Head of caudate nucleus (tissue), 42 donors: ENCODE measurements at regions of chr19 and their contacts with region 1.

Region 1: GRCh38 chr19:2273356-2274184 is 8.4 kb downstream of the PEAK3 start:
- DNase-seq: peak in 36 of 42 donors; percentile 42 to 86 (median 72)

Region 2: GRCh38 chr19:2199215-2199614 is 74.4 kb before region 1 on chr19:
- intact Hi-C with region 1: no loop called
- DNase-seq: peak in 4 of 42 donors; percentile 23 to 61 (median 40)

Region 3: DNA sequence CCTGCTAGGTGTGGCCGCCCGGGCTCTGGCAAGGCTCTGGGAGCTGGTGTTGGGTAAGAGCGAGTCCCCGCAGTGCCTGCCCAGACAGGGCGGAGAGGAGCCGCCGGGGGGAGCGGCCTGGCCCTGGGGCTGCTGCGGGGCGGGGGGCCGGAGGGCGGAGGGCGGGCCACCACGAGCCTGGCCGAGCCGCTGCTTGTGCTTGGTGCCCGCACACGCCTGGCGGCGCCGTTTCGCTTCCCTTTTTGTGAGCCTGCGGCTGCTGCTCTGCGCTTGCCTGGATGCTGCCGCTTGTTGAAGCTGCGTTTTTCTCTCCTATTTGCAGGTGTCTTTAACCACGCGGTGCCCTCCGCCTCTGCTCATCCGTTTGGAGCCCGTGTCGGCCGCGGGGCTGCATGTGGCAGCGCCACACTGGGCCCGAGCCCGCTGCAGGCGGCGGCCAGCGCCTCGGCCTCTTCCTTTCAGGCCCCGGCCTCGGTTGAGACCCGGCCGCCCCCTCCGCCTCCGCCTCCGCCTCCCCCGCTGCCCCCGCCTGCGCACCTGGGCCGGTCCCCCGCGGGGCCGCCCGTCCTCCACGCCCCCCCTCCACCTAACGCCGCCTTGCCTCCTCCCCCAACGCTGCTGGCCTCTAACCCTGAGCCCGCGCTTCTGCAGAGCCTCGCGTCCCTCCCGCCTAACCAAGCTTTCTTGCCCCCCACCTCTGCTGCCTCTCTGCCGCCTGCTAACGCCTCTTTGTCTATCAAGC is 46.0 kb before region 1 on chr19:
- intact Hi-C with region 1: no loop called
- DNase-seq: peak in 37 of 42 donors; percentile 33 to 82 (median 63)

Region 4: DNA sequence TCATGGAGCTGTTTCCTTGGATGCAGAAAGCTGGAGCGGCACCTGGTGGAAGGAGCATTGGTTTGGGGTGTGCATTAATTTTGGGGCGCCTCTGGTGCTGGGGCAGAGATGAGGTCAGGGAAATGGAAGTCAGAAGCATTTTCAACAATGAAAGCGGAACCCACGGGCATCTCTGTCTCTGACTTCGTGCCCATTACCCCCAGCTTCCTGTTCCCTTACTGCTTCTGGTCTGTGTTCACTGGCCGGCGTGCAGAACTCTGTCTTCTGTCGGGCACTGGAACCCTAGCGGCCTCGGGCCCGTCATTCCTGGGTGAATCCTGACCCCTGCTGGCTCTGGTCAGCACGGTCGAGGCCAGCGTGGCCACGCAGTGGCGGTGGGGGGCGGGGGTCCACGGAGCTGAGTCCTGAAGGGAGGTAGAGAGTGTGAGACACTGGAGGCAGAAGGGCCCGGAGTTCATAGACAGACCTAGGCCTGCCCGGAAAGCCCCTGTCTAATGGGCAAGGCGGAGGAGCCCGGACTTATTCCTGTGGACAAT is 42.3 kb after region 1 on chr19:
- intact Hi-C with region 1: loop called (anchors 5 kb)
- DNase-seq: peak; percentile 62 to 91 (median 81)

Region 5: DNA sequence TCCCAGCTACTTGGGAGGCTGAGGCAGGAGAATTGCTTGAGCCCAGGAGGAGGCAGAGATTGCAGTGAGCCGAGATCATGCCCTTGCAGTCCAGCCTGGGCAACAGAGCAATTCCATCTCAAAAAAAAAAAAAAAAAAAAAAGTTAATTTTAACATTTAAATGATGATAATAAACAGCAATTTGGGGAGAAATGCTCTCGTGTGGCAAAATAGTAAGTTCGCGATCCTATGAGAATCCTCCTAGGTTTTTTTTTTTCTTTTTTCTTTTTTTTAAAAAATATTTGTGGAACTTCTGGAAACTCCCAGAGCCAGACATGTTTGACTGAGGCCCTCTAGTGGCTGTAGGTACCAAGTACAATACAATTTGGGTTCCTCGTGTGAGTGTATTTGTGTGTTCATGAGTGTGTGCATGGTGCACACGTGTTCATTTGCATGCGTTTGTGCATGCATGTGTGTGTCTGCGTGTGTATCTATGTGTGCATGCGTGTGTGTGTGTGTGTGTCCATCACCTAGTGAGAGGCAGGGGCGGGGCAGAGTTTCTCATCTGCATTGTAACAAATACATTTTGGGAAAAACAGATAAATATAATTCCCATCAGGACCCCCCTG is 117.7 kb after region 1 on chr19:
- intact Hi-C with region 1: loop called (anchors 2 kb)
- DNase-seq: peak in 34 of 42 donors; percentile 22 to 83 (median 50)